Activated CD4-positive, alpha-beta memory T cell treated with anti-CD3 and anti-CD28 coated beads, Interleukin-2, amount 10 ng/mL, durations not matched to agents 7 days and 5 days (primary cell): ENCODE measurements at regions of chr17 and their contacts with region 1.

Region 1: DNA sequence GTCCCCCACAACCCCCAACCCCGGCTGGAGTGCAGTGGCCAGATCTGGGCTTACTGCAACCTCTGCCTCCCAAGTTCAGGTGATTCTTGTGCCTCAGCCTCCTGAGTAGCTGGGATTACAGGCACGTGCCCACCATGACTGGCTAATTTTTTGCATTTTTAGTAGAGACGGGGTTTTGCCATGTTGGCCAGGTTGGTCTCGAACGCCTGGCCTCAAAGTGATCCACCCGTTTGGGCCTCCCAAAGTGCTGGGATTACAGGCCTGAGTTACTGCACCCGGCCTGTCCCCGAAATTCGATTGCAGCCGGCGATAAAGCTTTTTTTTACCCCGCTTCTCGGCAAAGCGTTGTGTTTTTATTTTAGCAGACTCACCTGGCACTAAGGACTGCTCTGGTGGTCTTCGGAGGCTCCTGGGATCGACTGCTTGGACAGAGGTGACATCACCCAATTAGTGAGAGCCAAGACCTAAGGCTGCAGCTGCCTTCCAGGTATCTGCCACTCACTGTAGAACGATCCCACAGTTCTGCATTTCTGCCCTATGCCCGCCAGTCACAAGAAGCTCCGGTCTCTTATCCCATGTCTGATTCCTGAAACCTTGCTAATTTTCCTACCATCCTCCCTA is 82.2 kb upstream of the ARL4D start:
- DNase-seq: peak; percentile 43
- H3K4me3 Mint-ChIP-seq: no peak overlapping the region
- H3K27ac Mint-ChIP-seq: peak overlapping the region; percentile 61
- H3K4me1 Mint-ChIP-seq: peaks cover 17% of the 10 kb centered on the region
- H3K27me3 Mint-ChIP-seq: no peaks in the 10 kb centered on the region

Region 2: DNA sequence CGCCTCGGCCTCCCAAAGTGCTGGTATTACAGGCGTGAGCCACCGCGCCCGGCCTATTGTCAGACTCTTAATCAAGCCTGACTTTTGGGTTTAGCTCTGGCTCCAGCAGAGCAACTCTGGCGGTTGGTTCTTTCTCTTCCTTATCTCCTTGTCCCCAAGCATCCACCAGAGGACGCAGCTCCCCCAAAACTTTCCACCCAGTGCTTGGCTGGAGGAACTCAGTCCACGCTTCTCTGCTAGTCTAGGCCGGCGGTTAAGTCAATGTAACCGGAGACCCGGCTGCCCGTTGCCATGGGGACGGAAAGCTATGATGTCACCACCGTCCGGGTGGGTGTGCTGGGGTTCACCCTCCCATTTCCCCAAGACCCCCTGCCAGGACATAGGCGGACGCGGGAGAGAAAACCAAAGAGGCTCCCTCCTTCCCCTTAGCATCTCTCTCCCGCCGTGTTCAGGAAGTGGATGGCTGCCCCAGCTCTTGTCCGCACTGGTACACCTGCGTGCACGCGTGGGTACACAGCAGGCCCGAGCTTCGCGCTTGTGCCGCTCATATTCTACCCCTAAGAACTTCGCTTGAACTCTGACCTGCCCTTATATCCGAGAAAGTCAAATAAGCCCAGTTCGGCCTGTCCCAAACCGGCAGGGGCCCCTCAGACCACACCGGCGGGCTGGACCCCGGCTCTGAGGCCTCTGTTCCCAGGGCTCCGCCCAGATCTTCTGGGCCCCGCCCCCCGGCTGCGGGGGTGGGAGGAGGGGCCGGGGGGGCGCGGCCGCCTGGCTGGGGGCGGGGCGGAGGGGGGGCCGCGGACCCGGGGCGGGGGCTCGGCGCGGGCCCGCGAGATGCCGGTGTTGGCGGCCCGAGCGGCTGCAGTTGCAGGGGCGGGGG is 292.0 kb before region 1 on chr17 and contains the start of gene RND2:
- CTCF ChIA-PET with region 1: no interaction called
- POLR2A ChIA-PET with region 1: interaction called, 10 read pairs
- DNase-seq: peak; percentile 76
- H3K4me3 Mint-ChIP-seq: peak within 1 kb of the TSS; percentile 66
- H3K27ac Mint-ChIP-seq: peak within 1 kb of the TSS; percentile 4
- H3K4me1 Mint-ChIP-seq: peaks cover 24% of the 10 kb centered on the region
- H3K27me3 Mint-ChIP-seq: peaks cover 19% of the 10 kb centered on the region
- total RNA-seq, gene RND2: not detected

Region 3: DNA sequence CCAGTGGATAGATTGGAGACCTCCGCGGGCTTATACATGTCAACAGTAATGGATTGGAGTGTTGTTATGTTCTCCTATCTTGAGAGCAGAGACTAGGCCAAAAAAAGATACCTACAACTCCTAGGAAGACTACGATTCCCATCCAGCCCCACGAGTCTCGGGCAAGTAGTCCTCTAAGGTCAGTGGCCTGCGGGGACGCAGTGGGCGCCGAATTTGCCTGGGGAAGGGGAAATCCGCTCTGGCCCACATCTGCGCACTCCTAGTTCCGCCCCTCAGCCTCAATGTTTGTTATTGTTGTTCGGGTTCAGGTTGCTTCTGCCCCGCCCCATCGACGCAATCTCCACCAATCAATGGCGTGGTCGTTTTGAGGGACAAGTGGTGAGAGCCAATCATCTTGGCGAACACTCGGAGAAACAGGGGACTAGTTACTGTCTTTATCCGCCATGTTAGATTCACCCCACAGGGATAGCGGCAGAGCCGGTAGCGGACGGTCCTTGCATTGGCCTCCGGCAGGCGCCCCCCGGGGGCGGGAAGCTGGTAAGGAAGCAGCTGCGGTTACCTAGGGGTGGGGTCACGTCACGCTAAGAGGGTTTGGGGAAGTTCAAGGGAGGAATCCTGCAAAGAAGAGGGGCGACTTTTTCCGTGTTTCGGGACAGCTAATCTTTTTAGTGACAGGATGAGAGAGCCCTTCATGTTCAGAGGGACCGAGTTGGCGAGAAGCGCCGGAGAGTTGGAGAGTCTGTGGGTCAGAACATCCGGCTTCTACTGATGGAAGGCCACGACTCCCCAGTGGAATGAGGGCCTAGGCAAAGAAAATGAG is 145.7 kb before region 1 on chr17 and contains the start of gene NBR1:
- CTCF ChIA-PET with region 1: no interaction called
- POLR2A ChIA-PET with region 1: interaction called, 54 read pairs
- DNase-seq: peak; percentile 98
- H3K4me3 Mint-ChIP-seq: no peak within 1 kb of the TSS
- H3K27ac Mint-ChIP-seq: no peak within 1 kb of the TSS
- H3K4me1 Mint-ChIP-seq: peaks cover 39% of the 10 kb centered on the region
- H3K27me3 Mint-ChIP-seq: no peaks in the 10 kb centered on the region
- total RNA-seq, gene NBR1: 68.1 to 69.8 TPM

Region 4: GRCh38 chr17:43200127-43200526 is 116.5 kb before region 1 on chr17:
- CTCF ChIA-PET with region 1: no interaction called
- POLR2A ChIA-PET with region 1: interaction called, 16 read pairs
- DNase-seq: no peak
- H3K4me3 Mint-ChIP-seq: no peak overlapping the region
- H3K27ac Mint-ChIP-seq: no peak overlapping the region
- H3K4me1 Mint-ChIP-seq: peaks cover 3% of the 10 kb centered on the region
- H3K27me3 Mint-ChIP-seq: no peaks in the 10 kb centered on the region

Region 5: GRCh38 chr17:43224146-43224695 is 92.4 kb before region 1 on chr17:
- CTCF ChIA-PET with region 1: no interaction called
- POLR2A ChIA-PET with region 1: interaction called, 74 read pairs
- DNase-seq: no peak
- H3K4me3 Mint-ChIP-seq: no peak overlapping the region
- H3K27ac Mint-ChIP-seq: no peak overlapping the region
- H3K4me1 Mint-ChIP-seq: peaks cover 3% of the 10 kb centered on the region
- H3K27me3 Mint-ChIP-seq: no peaks in the 10 kb centered on the region

Region 6: DNA sequence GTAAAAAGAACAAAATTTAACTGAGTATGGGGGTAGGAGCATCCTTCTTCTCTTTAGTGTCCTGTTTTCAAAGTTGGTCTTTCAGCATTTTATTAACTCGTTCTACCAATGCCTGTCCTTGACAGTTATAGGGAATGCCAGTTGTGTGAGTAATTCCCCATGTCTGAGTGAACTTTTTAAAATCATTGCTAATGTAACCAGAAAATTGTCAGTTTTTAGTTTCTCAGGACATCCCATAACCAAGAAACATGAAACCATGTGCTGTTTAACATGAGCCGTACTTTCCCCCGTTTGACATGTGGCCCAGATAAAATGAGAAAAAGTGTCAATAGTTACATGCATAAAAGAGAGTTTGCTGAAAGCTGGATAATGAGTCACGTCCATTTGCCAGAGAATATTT is 10.8 kb after region 1 on chr17:
- CTCF ChIA-PET with region 1: no interaction called
- POLR2A ChIA-PET with region 1: no interaction called
- DNase-seq: no peak
- H3K4me3 Mint-ChIP-seq: no peak overlapping the region
- H3K27ac Mint-ChIP-seq: no peak overlapping the region
- H3K4me1 Mint-ChIP-seq: no peaks in the 10 kb centered on the region
- H3K27me3 Mint-ChIP-seq: peaks cover 32% of the 10 kb centered on the region

Region 7: DNA sequence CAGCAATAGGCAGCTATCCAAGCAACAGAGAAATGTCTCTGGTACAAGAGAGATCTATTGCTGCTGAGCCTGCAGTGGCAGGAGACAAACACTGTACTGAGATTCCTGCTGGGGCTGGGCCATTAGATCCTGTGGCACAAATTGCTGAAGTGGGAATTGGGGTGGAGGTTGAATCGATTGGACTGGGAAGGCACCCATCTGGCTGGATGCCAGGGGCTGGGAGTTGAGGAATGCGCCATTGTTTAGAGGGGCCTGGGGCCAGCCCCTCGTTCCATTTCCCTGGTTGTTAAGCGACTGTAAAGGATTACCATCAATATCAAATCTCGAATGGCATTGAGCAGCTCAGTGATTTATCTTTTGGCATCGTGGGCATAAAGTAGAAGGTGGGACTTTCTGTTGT is 28.1 kb after region 1 on chr17:
- CTCF ChIA-PET with region 1: no interaction called
- POLR2A ChIA-PET with region 1: no interaction called
- DNase-seq: no peak
- H3K4me3 Mint-ChIP-seq: no peak overlapping the region
- H3K27ac Mint-ChIP-seq: no peak overlapping the region
- H3K4me1 Mint-ChIP-seq: peaks cover 12% of the 10 kb centered on the region
- H3K27me3 Mint-ChIP-seq: no peaks in the 10 kb centered on the region

Region 8: DNA sequence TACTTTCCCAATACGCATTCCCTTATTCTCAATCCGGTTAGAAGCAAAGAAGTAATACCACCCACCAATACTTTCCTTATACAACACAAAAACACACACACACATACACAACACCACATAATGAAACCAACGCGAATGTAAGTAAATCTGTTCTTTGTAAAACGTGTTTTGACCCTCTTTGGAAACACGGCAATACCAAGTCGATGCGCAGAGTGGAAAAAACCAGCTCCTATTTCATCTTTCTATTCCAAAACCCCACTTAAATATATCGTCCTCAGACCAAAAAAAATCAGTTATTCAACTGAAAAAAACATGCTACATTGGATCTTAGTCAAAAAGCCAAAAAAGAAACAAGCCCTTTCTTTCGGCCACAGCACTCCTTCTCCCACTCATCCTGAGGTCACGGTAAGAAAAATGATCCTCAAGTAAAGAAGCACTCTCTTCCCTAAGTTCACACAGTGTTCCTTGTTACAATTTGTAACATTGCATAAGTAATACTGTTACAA is 51.2 kb after region 1 on chr17:
- CTCF ChIA-PET with region 1: interaction called, 5 read pairs
- POLR2A ChIA-PET with region 1: interaction called, 163 read pairs
- DNase-seq: peak; percentile 57
- H3K4me3 Mint-ChIP-seq: peak overlapping the region; percentile 86
- H3K27ac Mint-ChIP-seq: peak overlapping the region; percentile 99
- H3K4me1 Mint-ChIP-seq: peaks cover 52% of the 10 kb centered on the region
- H3K27me3 Mint-ChIP-seq: no peaks in the 10 kb centered on the region

Region 9: DNA sequence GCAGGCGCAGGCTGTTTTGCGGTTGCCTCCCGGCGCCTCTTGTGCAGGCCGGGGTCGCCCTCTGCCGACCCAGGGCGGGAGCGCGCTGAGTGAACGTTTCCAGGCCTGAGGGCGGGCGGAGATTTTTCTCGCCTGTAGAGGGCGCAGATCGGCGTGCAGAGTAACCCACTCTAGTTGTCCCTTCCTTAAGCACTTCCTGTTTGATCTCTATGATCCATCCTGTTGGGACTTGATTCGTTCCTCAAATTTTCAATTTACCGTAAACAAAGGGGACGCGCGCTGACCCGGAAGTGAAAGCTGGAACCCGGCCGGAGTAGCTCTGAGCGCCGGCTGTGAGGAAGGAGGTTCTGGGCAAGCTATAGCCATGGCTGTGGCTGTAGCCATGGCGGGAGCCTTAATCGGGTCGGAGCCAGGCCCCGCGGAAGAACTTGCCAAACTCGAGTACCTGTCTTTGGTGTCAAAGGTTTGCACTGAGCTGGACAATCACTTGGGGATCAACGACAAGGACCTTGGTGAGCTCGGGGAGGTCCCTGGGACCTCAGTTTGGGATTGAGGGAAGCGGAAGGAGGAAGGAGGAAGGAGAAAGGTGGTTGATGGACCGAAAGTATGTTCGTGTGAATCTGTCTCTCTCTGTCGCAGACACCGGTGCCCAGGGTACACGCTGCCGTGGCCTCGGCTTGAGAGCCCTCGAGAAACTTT is 167.2 kb after region 1 on chr17 and contains the start of gene DHX8:
- CTCF ChIA-PET with region 1: interaction called, 4 read pairs
- POLR2A ChIA-PET with region 1: interaction called, 17 read pairs
- DNase-seq: peak; percentile 99
- H3K4me3 Mint-ChIP-seq: peak within 1 kb of the TSS; percentile 100
- H3K27ac Mint-ChIP-seq: peak within 1 kb of the TSS; percentile 98
- H3K4me1 Mint-ChIP-seq: peaks cover 26% of the 10 kb centered on the region
- H3K27me3 Mint-ChIP-seq: no peaks in the 10 kb centered on the region
- total RNA-seq, gene DHX8: 59.8 to 61.3 TPM